A673 (cell line): ENCODE measurements at regions of chr9 and their contacts with region 1.

Region 1: GRCh38 chr9:14768405-14769229 is 46.1 kb upstream of the CER1 start:
- DNase-seq: peak; percentile 75
- H3K4me3 ChIP-seq: no peak overlapping the region
- H3K27ac ChIP-seq: no peak overlapping the region
- H3K4me1 ChIP-seq: peaks cover 17% of the 10 kb centered on the region
- H3K27me3 ChIP-seq: no peaks in the 10 kb centered on the region
- CTCF ChIP-seq: peak; percentile 62

Region 2: DNA sequence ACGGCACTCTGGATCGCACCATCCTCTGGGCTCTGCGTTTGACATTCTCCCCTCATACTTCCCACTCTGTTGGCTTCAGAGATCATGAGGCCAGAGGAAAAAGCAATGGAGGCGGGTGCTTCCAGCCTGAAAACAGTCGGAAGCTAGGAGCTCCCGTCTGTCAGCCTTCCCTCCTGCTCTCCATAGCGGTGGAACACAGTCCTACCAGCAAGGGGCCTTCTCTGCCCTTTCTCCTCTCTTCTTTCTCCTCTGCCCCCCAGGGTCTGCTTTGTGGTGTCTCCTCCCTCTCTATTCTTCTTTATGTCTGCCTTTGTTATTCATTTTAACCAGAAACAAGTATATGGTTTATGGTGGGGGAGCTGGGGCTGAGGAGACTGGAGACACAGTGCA is 302.2 kb before region 1 on chr9:
- CTCF ChIA-PET with region 1: interaction called, 3 read pairs
- POLR2A ChIA-PET with region 1: no interaction called
- intact Hi-C with region 1: loop called (anchors 2 kb)
- DNase-seq: no peak
- H3K4me3 ChIP-seq: no peak overlapping the region
- H3K27ac ChIP-seq: no peak overlapping the region
- H3K4me1 ChIP-seq: peaks cover 6% of the 10 kb centered on the region
- H3K27me3 ChIP-seq: no peaks in the 10 kb centered on the region
- CTCF ChIP-seq: no peak

Region 3: GRCh38 chr9:14616188-14616982 is 152.2 kb before region 1 on chr9:
- CTCF ChIA-PET with region 1: no interaction called
- POLR2A ChIA-PET with region 1: no interaction called
- intact Hi-C with region 1: loop called (anchors 2 kb)
- DNase-seq: peak; percentile 70
- H3K4me3 ChIP-seq: no peak overlapping the region
- H3K27ac ChIP-seq: no peak overlapping the region
- H3K4me1 ChIP-seq: peaks cover 20% of the 10 kb centered on the region
- H3K27me3 ChIP-seq: no peaks in the 10 kb centered on the region
- CTCF ChIP-seq: peak; percentile 69

Region 4: DNA sequence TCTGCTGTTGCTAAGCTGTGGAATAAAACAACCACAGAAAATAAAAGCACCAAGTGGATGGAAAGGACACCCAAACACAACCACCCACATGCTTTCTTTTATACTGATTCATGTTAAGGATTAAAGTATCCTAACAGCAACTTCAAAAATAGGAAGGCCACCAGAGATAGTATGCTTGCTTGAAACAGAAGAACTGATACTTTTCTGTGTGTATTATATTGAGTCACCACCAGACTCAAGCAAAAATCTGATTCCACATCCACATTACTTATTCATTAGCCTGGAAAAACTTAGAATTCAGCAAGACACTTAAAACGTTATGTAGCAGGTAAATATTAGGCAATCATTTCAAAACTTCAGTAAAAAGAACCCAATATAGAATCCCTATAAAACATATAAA is 127.7 kb before region 1 on chr9:
- CTCF ChIA-PET with region 1: no interaction called
- POLR2A ChIA-PET with region 1: no interaction called
- intact Hi-C with region 1: no loop called
- DNase-seq: no peak
- H3K4me3 ChIP-seq: no peak overlapping the region
- H3K27ac ChIP-seq: no peak overlapping the region
- H3K4me1 ChIP-seq: no peaks in the 10 kb centered on the region
- H3K27me3 ChIP-seq: no peaks in the 10 kb centered on the region
- CTCF ChIP-seq: no peak

Region 5: GRCh38 chr9:14661421-14662059 is 107.1 kb before region 1 on chr9:
- CTCF ChIA-PET with region 1: no interaction called
- POLR2A ChIA-PET with region 1: no interaction called
- intact Hi-C with region 1: loop called (anchors 5 kb)
- DNase-seq: peak; percentile 64
- H3K4me3 ChIP-seq: no peak overlapping the region
- H3K27ac ChIP-seq: no peak overlapping the region
- H3K4me1 ChIP-seq: peaks cover 21% of the 10 kb centered on the region
- H3K27me3 ChIP-seq: no peaks in the 10 kb centered on the region
- CTCF ChIP-seq: peak; percentile 62

Region 6: GRCh38 chr9:14719231-14719923 is 49.2 kb before region 1 on chr9:
- CTCF ChIA-PET with region 1: no interaction called
- POLR2A ChIA-PET with region 1: no interaction called
- intact Hi-C with region 1: loop called (anchors 2 kb)
- DNase-seq: peak; percentile 81
- H3K4me3 ChIP-seq: peak overlapping the region; percentile 60
- H3K27ac ChIP-seq: peak overlapping the region; percentile 100
- H3K4me1 ChIP-seq: peaks cover 54% of the 10 kb centered on the region
- H3K27me3 ChIP-seq: no peaks in the 10 kb centered on the region
- CTCF ChIP-seq: no peak